PC-9 (cell line): ENCODE measurements at regions of chr17 and their contacts with region 1.

Region 1: GRCh38 chr17:49031965-49032928 is 35.1 kb downstream of the IGF2BP1 start:
- DNase-seq: peak; percentile 58 to 70
- H3K4me3 ChIP-seq: no peak overlapping the region
- H3K27ac ChIP-seq: no peak overlapping the region
- H3K4me1 ChIP-seq: no peaks in the 10 kb centered on the region
- H3K27me3 ChIP-seq: no peaks in the 10 kb centered on the region
- CTCF ChIP-seq: peak; percentile 86

Region 2: GRCh38 chr17:48593840-48594537 is 438.3 kb before region 1 on chr17:
- CTCF ChIA-PET with region 1: interaction called, 10 read pairs
- POLR2A ChIA-PET with region 1: no interaction called
- intact Hi-C with region 1: no loop called
- DNase-seq: no peak
- H3K4me3 ChIP-seq: no peak overlapping the region
- H3K27ac ChIP-seq: no peak overlapping the region
- H3K4me1 ChIP-seq: no peaks in the 10 kb centered on the region
- H3K27me3 ChIP-seq: no peaks in the 10 kb centered on the region
- CTCF ChIP-seq: peak; percentile 66

Region 3: DNA sequence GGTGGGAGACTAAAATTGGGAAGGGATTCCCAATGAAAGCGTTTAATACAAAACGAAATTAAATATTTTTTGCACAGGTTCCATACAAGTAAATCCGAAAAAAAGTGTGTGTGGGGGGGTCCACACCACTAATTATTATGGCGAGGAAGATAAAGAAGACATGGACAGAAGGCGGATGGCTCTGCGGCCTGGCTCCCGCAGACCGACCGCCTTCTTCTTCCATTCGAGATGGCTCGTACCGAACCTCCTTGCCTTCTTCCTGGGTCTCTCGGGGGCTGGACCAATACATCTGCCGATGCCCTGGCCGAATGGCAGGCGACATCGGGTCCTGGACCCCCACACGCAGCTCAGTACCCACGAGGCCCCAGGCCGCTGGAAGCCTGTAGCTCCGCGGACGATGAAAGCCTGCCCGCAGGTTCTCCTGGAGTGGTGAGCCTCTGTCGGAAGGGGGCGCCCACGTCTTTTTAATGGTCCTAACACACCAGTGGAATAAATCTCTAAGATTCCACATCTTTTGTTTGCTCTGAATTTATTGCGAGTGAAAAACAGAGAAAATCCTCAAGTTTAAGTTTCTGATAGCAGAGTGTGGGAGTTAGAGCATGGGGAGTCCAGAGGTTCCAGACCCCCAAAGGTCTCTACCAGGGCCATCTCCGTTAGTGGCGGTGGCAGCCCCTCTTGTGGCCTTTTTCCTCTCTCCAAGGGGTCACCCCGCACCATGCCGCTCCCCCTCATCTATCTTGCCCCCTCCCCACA is 307.8 kb before region 1 on chr17:
- CTCF ChIA-PET with region 1: no interaction called
- POLR2A ChIA-PET with region 1: no interaction called
- intact Hi-C with region 1: loop called (anchors 1 kb)
- DNase-seq: peak; percentile 50 to 63
- H3K4me3 ChIP-seq: no peak overlapping the region
- H3K27ac ChIP-seq: no peak overlapping the region
- H3K4me1 ChIP-seq: no peaks in the 10 kb centered on the region
- H3K27me3 ChIP-seq: peaks cover 72% of the 10 kb centered on the region
- CTCF ChIP-seq: peak; percentile 89

Region 4: GRCh38 chr17:48878918-48879898 is 153.0 kb before region 1 on chr17:
- CTCF ChIA-PET with region 1: interaction called, 3 read pairs
- POLR2A ChIA-PET with region 1: no interaction called
- intact Hi-C with region 1: loop called (anchors 2 kb)
- DNase-seq: peak; percentile 49 to 52
- H3K4me3 ChIP-seq: no peak overlapping the region
- H3K27ac ChIP-seq: no peak overlapping the region
- H3K4me1 ChIP-seq: no peaks in the 10 kb centered on the region
- H3K27me3 ChIP-seq: 0 out of 2 replicates have a peak, but pooled peaks cover 4% of the 10 kb centered on the region
- CTCF ChIP-seq: peak; percentile 99

Region 5: GRCh38 chr17:49101054-49101947 is 69.1 kb after region 1 on chr17:
- CTCF ChIA-PET with region 1: interaction called, 12 read pairs
- POLR2A ChIA-PET with region 1: no interaction called
- intact Hi-C with region 1: no loop called
- DNase-seq: peak; percentile 86 to 100
- H3K4me3 ChIP-seq: peak overlapping the region; percentile 23; the same call in 1 of the 2 replicates
- H3K27ac ChIP-seq: peak overlapping the region; percentile 97
- H3K4me1 ChIP-seq: peaks cover 45% of the 10 kb centered on the region
- H3K27me3 ChIP-seq: no peaks in the 10 kb centered on the region
- CTCF ChIP-seq: no peak

Region 6: GRCh38 chr17:49227436-49228261 is 195.4 kb after region 1 on chr17:
- CTCF ChIA-PET with region 1: no interaction called
- POLR2A ChIA-PET with region 1: no interaction called
- intact Hi-C with region 1: loop called (anchors 5 kb)
- DNase-seq: peak; percentile 56 to 69
- H3K4me3 ChIP-seq: no peak overlapping the region
- H3K27ac ChIP-seq: no peak overlapping the region
- H3K4me1 ChIP-seq: peaks cover 13% of the 10 kb centered on the region
- H3K27me3 ChIP-seq: peaks cover 29% of the 10 kb centered on the region; the same call in 1 of the 2 replicates
- CTCF ChIP-seq: peak; percentile 94

Region 7: DNA sequence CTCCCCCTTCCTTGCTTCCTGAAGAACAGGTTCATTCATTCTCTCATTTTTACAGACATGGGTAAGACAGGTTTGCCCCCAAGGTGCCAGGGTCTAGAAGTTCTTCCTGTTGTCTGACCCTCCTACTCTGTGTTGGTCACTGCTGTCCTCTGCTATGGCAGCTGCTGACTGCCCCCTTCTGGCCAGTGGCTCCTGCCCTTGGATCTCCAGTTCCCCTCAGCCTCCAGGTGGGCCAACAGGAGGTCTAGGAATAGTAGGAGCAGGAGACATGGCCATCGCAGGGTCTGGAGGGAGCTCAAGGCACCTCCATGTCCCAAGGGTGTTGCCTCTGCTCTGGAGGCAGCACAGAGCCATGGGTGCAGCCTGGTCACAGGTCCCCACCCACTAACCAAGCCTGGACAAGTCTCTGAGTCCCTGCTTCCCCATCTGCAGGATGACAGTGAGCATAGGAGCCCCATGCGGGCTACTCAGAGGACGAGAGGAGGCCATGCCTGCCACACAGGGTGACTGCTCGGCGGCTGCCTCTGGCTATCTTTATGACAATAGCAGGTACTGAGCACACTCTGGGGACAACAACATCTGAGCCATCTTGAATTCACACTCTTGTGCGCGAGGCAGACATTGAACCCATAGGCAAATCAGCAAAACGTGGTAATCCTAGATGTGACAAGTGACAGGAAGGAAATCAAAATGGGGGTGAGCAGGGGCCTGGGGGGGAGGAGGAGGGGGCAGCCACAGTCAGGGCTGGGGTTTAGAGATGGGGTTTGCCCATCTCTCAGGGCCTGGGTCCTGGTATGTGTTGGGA is 516.5 kb after region 1 on chr17:
- CTCF ChIA-PET with region 1: no interaction called
- POLR2A ChIA-PET with region 1: no interaction called
- intact Hi-C with region 1: no loop called
- DNase-seq: peak in 1 of 2 experiments; percentile 53
- H3K4me3 ChIP-seq: no peak overlapping the region
- H3K27ac ChIP-seq: no peak overlapping the region
- H3K4me1 ChIP-seq: no peaks in the 10 kb centered on the region
- H3K27me3 ChIP-seq: peaks cover 10% of the 10 kb centered on the region; the same call in 1 of the 2 replicates
- CTCF ChIP-seq: peak; percentile 79